CD4-positive, alpha-beta T cell (primary cell): ENCODE measurements at regions of chr2 and their contacts with region 1.

Region 1: GRCh38 chr2:182666674-182667314 is 49.3 kb upstream of the DNAJC10 start:
- DNase-seq: peak in 5 of 14 experiments; percentile 3 to 65 (median 43)
- ATAC-seq: peak; percentile 49
- H3K4me3 ChIP-seq: no peak overlapping the region
- H3K4me3 Mint-ChIP-seq: no peak overlapping the region
- H3K27ac ChIP-seq: no peak overlapping the region
- H3K27ac Mint-ChIP-seq: no peak overlapping the region
- H3K4me1 ChIP-seq: no peaks in the 10 kb centered on the region
- H3K4me1 Mint-ChIP-seq: no peaks in the 10 kb centered on the region
- H3K27me3 ChIP-seq: no peaks in the 10 kb centered on the region
- H3K27me3 Mint-ChIP-seq: peaks cover 6% of the 10 kb centered on the region
- CTCF ChIP-seq: peak; percentile 70

Region 2: GRCh38 chr2:183093857-183094657 is 427.3 kb after region 1 on chr2:
- CTCF ChIA-PET with region 1: interaction called, 3 read pairs
- POLR2A ChIA-PET with region 1: no interaction called
- intact Hi-C with region 1: loop called in 1 of 2 experiments (anchors 5 kb)
- DNase-seq: peak in 1 of 14 experiments; percentile 14
- ATAC-seq: no peak
- H3K4me3 ChIP-seq: no peak overlapping the region
- H3K4me3 Mint-ChIP-seq: no peak overlapping the region
- H3K27ac ChIP-seq: no peak overlapping the region
- H3K27ac Mint-ChIP-seq: no peak overlapping the region
- H3K4me1 ChIP-seq: no peaks in the 10 kb centered on the region
- H3K4me1 Mint-ChIP-seq: no peaks in the 10 kb centered on the region
- H3K27me3 ChIP-seq: no peaks in the 10 kb centered on the region
- H3K27me3 Mint-ChIP-seq: no peaks in the 10 kb centered on the region
- CTCF ChIP-seq: peak; percentile 22